OCI-LY7 (cell line): ENCODE measurements at regions of chr4 and their contacts with region 1.

Region 1: GRCh38 chr4:160423879-160424451 is 1321.1 kb downstream of the RAPGEF2 start:
- DNase-seq: no peak
- H3K4me3 ChIP-seq: no peak overlapping the region
- H3K27ac ChIP-seq: no peak overlapping the region
- H3K4me1 ChIP-seq: no peaks in the 10 kb centered on the region
- CTCF ChIP-seq: no peak

Region 2: DNA sequence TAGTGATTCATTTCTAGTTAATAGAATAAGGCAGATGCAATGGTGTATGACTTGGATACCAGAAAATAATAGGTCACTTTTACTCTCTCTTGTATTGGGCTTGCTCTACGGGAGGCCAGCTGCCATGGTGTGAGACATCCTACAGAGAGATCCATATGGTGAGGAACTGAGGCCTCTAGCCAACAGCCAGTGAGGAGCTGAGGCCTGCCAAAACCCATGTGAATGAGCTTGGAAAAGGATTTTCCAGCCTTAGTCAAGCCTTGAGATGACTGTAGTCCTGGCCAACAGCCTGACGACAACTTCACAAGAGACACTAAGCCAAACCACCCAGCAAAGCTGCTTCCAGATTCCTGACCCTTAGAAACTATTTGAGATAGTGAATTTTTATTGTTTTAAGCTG is 20.9 kb before region 1 on chr4:
- CTCF ChIA-PET with region 1: no interaction called
- POLR2A ChIA-PET with region 1: no interaction called
- intact Hi-C with region 1: loop called (anchors 2 kb)
- DNase-seq: no peak
- H3K4me3 ChIP-seq: no peak overlapping the region
- H3K27ac ChIP-seq: no peak overlapping the region
- H3K4me1 ChIP-seq: no peaks in the 10 kb centered on the region
- CTCF ChIP-seq: no peak

Region 3: GRCh38 chr4:160811956-160812355 is 388.0 kb after region 1 on chr4:
- CTCF ChIA-PET with region 1: no interaction called
- POLR2A ChIA-PET with region 1: no interaction called
- intact Hi-C with region 1: no loop called
- DNase-seq: no peak
- H3K4me3 ChIP-seq: no peak overlapping the region
- H3K27ac ChIP-seq: no peak overlapping the region
- H3K4me1 ChIP-seq: no peaks in the 10 kb centered on the region
- CTCF ChIP-seq: no peak